Activated B cell treated with CpG ODN at 0.5 μM for 24 hours (primary cell): ENCODE measurements at regions of chrX and their contacts with region 1.

Region 1: GRCh38 chrX:8971116-8971515 is 62.8 kb downstream of the FAM9B start:
- DNase-seq: no peak
- ATAC-seq: peak; percentile 54
- H3K4me3 Mint-ChIP-seq: no peak overlapping the region
- H3K27ac Mint-ChIP-seq: no peak overlapping the region
- H3K4me1 Mint-ChIP-seq: no peaks in the 10 kb centered on the region
- H3K27me3 Mint-ChIP-seq: peaks cover under 1% of the 10 kb centered on the region
- CTCF ChIP-seq: no peak

Region 2: GRCh38 chrX:9501362-9501761 is 530.2 kb after region 1 on chrX:
- CTCF ChIA-PET with region 1: no interaction called
- POLR2A ChIA-PET with region 1: no interaction called
- intact Hi-C with region 1: loop called (anchors 1 kb)
- DNase-seq: no peak
- ATAC-seq: no peak
- H3K4me3 Mint-ChIP-seq: no peak overlapping the region
- H3K27ac Mint-ChIP-seq: no peak overlapping the region
- H3K4me1 Mint-ChIP-seq: peaks cover 16% of the 10 kb centered on the region
- H3K27me3 Mint-ChIP-seq: no peaks in the 10 kb centered on the region
- CTCF ChIP-seq: no peak

Region 3: DNA sequence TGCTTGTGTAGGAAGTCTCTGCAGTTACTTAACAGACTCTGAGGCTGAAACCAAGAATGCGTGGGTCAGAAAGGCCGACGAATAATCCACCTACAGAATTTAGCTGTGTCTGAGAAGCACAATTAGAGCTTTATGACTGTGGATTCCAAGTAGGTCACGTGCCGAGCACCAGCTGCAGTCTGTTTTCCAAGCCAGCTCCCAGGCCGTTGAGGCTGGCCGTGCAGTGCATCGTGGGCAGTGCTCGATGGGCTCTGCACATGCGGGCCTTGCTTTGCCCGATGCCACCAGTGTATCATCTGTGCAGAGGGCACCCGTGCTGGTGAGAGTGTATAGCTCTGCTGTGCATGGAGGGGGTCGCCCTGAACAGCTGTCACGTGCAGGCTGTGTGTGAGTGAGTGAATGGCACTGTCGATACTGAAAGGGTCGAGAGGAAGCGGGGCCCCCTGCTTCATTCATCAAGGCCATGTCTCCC is 928.6 kb after region 1 on chrX:
- CTCF ChIA-PET with region 1: no interaction called
- POLR2A ChIA-PET with region 1: no interaction called
- intact Hi-C with region 1: no loop called
- DNase-seq: no peak
- ATAC-seq: no peak
- H3K4me3 Mint-ChIP-seq: no peak overlapping the region
- H3K27ac Mint-ChIP-seq: no peak overlapping the region
- H3K4me1 Mint-ChIP-seq: no peaks in the 10 kb centered on the region
- H3K27me3 Mint-ChIP-seq: no peaks in the 10 kb centered on the region
- CTCF ChIP-seq: no peak